HCT116 (cell line): ENCODE measurements at regions of chr3 and their contacts with region 1.

Region 1: GRCh38 chr3:36957862-36958686 is 13.2 kb upstream of the TRANK1 start:
- DNase-seq: no peak
- ATAC-seq: no peak
- H3K4me3 ChIP-seq: no peak overlapping the region
- H3K27ac ChIP-seq: no peak overlapping the region
- H3K4me1 ChIP-seq: peaks cover 0 to 8% of the 10 kb centered on the region in 2 experiments; a peak in 2 of 4 replicates
- H3K27me3 ChIP-seq: no peaks in the 10 kb centered on the region
- CTCF ChIP-seq: no peak
- POLR2A ChIP-seq: no peak
- RAD21 ChIP-seq: no peak

Region 2: GRCh38 chr3:36741285-36741684 is 216.8 kb before region 1 on chr3:
- CTCF ChIA-PET with region 1: interaction called, 5 read pairs
- POLR2A ChIA-PET with region 1: no interaction called
- RAD21 ChIA-PET with region 1: no interaction called
- intact Hi-C with region 1: loop called (anchors 5 kb)
- DNase-seq: no peak
- ATAC-seq: peak; percentile 79
- H3K4me3 ChIP-seq: no peak overlapping the region
- H3K27ac ChIP-seq: no peak overlapping the region
- H3K4me1 ChIP-seq: no peaks in the 10 kb centered on the region
- H3K27me3 ChIP-seq: peaks cover 29% of the 10 kb centered on the region
- CTCF ChIP-seq: peak in 2 of 3 experiments; percentile 24 to 35; a peak in 2 of 6 replicates
- POLR2A ChIP-seq: no peak
- RAD21 ChIP-seq: peak; percentile 36

Region 3: DNA sequence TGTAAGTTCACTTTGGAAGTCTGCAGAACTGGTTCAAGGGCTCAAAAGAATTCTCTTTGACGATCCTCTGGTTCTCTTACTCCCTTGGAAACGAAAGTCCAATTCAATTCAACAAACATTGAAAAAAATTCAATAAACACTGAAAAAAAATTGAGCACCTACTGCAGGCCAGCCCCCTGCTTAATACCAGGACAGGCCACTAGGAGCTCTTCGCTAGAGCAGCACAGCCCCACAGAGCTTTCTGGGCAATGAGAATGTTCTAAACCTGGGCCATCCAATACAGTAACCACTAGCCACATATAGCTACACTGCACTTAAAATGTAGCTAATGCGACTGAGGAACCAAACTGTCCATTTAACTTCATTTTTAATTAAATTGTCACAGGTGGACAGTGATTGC is 143.3 kb before region 1 on chr3:
- CTCF ChIA-PET with region 1: no interaction called
- POLR2A ChIA-PET with region 1: no interaction called
- RAD21 ChIA-PET with region 1: no interaction called
- intact Hi-C with region 1: loop called (anchors 10 kb)
- DNase-seq: no peak
- ATAC-seq: peak; percentile 92
- H3K4me3 ChIP-seq: no peak overlapping the region
- H3K27ac ChIP-seq: no peak overlapping the region
- H3K4me1 ChIP-seq: no peaks in the 10 kb centered on the region
- H3K27me3 ChIP-seq: peaks cover 9% of the 10 kb centered on the region; the same call in 1 of the 2 replicates
- CTCF ChIP-seq: peak in 2 of 3 experiments; percentile 41 to 52; a peak in 4 of 6 replicates
- POLR2A ChIP-seq: no peak
- RAD21 ChIP-seq: no peak

Region 4: GRCh38 chr3:36904641-36905040 is 53.4 kb before region 1 on chr3:
- CTCF ChIA-PET with region 1: interaction called, 19 read pairs
- POLR2A ChIA-PET with region 1: no interaction called
- RAD21 ChIA-PET with region 1: interaction called in 1 of 2 experiments, 3 read pairs
- intact Hi-C with region 1: no loop called
- DNase-seq: no peak
- ATAC-seq: peak; percentile 80
- H3K4me3 ChIP-seq: no peak overlapping the region
- H3K27ac ChIP-seq: no peak overlapping the region
- H3K4me1 ChIP-seq: peaks cover 0 to 4% of the 10 kb centered on the region in 2 experiments; a peak in 1 of 4 replicates
- H3K27me3 ChIP-seq: no peaks in the 10 kb centered on the region
- CTCF ChIP-seq: peak; percentile 15 to 50 (median 42); a peak in 5 of 6 replicates
- POLR2A ChIP-seq: no peak
- RAD21 ChIP-seq: peak; percentile 51